ENCODE measurements at regions of chr2 and their contacts with region 1.

Region 1: DNA sequence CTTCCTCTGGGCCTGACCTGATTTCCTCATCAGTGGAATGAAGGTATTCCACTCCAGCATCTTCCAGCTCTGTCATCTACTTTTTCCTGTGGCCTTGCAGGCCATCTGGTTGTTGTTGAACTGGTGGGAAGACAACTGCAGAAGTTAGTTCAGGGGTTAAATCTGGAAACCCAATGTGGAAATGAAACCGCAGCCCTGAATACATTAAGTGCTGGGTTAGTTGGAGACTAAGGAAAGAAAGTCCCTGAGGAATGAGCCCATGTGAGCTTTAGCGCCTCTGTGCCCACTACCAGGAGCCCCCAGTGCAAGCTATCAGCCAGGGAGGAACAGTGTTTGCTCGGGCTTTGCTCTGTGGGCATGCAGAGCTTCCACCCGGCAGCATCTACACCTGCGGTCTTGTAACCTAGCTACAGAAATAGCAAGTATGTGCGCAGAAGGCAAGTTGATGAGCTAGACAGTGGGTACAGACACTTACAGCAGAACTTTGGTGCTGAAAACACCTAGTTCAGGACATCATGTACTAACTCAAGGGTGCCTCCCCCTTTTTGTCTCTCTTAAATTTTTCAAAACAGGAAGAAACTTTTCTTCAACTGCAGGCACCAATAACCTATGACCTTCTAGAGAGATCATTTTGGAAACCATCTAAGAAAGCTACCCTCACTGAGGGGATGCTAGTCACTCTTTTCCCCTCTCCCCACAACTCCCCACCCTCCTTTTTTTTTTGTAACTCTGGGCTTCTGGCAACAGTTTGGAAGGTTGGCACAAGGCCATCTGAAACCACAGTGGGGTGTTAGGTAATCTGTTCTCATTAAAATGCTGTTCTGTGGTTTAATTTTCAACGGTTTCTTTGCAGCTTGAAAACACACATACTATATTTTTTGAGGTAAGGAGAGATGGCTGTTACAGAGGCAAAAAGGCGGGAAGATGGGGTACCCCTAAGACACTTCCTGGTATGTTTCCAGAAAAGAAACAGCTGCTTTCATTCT is 18.3 kb upstream of the CXCR4 start:
- DNase-seq: peak; percentile 52
- ATAC-seq: peak; percentile 48
- H3K4me3 Mint-ChIP-seq: peak overlapping the region; percentile 62
- H3K27ac Mint-ChIP-seq: peak overlapping the region; percentile 99
- H3K4me1 Mint-ChIP-seq: peaks cover 99% of the 10 kb centered on the region
- H3K27me3 Mint-ChIP-seq: no peaks in the 10 kb centered on the region
- CTCF ChIP-seq: no peak

Region 2: GRCh38 chr2:135531231-135532228 is 604.7 kb before region 1 on chr2 and contains the start of gene R3HDM1:
- CTCF ChIA-PET with region 1: no interaction called
- POLR2A ChIA-PET with region 1: interaction called, 3 read pairs
- intact Hi-C with region 1: loop called (anchors 5 kb)
- DNase-seq: peak; percentile 82
- ATAC-seq: peak; percentile 81
- H3K4me3 Mint-ChIP-seq: no peak within 1 kb of the TSS
- H3K27ac Mint-ChIP-seq: peak within 1 kb of the TSS; percentile 68
- H3K4me1 Mint-ChIP-seq: peaks cover 18% of the 10 kb centered on the region
- H3K27me3 Mint-ChIP-seq: no peaks in the 10 kb centered on the region
- CTCF ChIP-seq: no peak
- total RNA-seq, gene R3HDM1: 49.8 and 54.8 TPM in 2 replicates

Region 3: DNA sequence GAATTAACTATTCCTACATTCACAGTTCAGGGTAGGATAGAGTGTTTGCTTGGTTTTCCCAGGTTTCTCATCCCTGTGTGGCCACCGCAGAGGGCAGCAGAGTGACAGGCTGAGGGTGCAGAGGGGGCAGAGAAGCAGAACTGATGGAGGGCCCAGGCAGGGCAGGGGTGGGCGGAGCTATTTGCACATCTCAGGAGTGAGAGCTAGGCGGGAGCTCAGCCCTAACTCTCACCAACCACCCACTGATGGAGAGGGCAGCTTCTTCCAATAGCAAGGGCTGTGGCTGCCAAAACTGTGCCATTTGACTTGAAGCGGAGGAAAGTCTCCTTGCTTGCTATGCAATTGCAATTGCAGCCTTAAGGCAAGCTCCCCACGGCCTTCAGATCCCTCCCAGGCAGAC is 138.8 kb before region 1 on chr2:
- CTCF ChIA-PET with region 1: interaction called, 6 read pairs
- POLR2A ChIA-PET with region 1: interaction called, 24 read pairs
- intact Hi-C with region 1: no loop called
- DNase-seq: peak; percentile 41
- ATAC-seq: peak; percentile 97
- H3K4me3 Mint-ChIP-seq: peak overlapping the region; percentile 24
- H3K27ac Mint-ChIP-seq: peak overlapping the region; percentile 86
- H3K4me1 Mint-ChIP-seq: peaks cover 51% of the 10 kb centered on the region
- H3K27me3 Mint-ChIP-seq: no peaks in the 10 kb centered on the region
- CTCF ChIP-seq: no peak

Region 4: GRCh38 chr2:136117909-136118818 is 18.1 kb before region 1 on chr2 and contains the start of gene CXCR4:
- CTCF ChIA-PET with region 1: interaction called, 18 read pairs
- POLR2A ChIA-PET with region 1: interaction called, 478 read pairs
- intact Hi-C with region 1: loop called (anchors 1 kb)
- DNase-seq: peak; percentile 90
- ATAC-seq: peak; percentile 51
- H3K4me3 Mint-ChIP-seq: peak within 1 kb of the TSS; percentile 96
- H3K27ac Mint-ChIP-seq: peak within 1 kb of the TSS; percentile 97
- H3K4me1 Mint-ChIP-seq: peaks cover 66% of the 10 kb centered on the region
- H3K27me3 Mint-ChIP-seq: no peaks in the 10 kb centered on the region
- CTCF ChIP-seq: no peak
- total RNA-seq, gene CXCR4: 200 and 213 TPM in 2 replicates

Region 5: DNA sequence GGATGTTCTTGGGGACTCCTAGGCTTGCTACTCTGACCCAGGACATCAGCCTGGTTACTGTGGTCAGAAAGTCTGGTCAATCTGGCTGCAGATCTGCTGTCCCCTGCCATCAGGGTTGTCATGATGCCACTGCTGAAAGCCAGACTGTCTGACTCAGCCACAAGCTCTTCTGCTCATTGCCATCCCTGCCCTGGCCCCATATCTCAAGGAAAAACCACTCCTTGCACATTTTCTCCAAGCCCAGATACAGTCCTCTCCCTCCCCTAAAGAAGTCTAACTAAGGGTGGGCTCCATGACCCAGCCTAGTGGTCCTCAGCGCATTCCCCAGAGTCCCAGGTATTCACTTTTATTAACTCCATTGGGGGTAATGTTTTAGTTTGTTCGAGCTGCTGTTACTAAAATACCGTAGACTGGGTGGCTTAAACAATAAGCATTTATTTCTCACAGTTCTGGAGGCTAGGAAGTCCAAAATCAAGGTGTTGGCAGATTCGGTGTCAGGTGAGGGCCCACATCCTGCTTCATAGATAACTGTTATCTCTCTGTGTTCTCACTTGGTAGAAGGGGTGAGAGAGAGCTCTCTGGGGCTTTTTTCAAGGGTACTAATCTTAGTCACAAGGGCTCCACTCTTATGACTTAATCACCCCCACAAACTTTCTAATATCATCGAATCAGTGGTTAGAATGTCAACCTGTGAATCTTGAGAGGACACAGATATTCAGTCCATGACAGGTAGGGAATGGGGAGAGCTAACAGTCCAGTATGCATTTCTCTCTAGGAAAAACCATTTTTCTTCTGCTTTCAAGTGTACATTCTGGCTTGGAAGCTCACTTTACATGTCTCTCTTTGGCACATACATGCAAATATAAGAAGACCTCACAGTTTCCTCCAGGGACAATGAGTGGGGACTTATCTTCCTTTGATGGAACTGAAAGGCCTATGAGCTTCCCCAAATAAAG is 76.5 kb after region 1 on chr2:
- CTCF ChIA-PET with region 1: interaction called, 20 read pairs
- POLR2A ChIA-PET with region 1: interaction called, 248 read pairs
- intact Hi-C with region 1: loop called (anchors 1 kb)
- DNase-seq: no peak
- ATAC-seq: peak; percentile 72
- H3K4me3 Mint-ChIP-seq: peak overlapping the region; percentile 64
- H3K27ac Mint-ChIP-seq: peak overlapping the region; percentile 97
- H3K4me1 Mint-ChIP-seq: peaks cover 97% of the 10 kb centered on the region
- H3K27me3 Mint-ChIP-seq: no peaks in the 10 kb centered on the region
- CTCF ChIP-seq: no peak

Region 6: DNA sequence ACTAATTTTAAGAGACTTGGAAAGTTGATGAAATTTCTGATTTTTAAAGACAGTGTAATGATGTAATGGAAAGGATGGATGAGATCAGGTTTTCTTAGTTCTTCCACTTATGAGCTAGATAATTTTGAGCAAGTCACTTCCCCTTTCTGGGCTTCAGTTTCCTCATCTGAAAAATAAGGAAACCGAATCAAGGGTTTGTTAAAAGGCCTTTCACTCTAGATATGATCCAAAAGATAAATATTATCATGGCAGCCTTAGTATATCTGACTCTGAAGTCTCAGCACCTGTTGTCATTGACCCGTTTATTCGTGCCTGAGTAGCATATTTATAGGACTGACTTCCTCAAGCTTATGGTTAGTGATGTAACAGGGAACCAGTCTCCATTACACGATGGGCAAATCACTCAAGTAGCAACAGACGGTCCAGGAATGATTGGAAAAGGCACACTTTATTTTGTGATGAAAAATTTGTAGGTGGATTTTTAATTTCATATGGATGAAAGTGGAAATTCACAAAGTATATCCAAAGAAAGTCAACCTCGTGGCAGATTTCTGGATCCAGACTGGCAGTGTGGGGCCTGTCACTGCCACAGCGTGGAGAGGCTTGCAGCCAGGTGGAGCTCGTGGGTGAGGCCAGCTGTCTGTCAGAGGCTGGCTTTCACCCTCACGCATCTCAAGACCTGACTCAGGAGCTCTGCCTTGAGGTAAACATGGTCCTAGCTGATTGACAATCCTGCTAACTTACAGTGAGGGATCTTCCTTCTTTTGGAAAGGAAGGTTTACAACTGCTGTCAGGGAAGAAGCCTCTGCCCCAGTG is 119.6 kb after region 1 on chr2:
- CTCF ChIA-PET with region 1: interaction called, 17 read pairs
- POLR2A ChIA-PET with region 1: interaction called, 111 read pairs
- intact Hi-C with region 1: loop called (anchors 1 kb)
- DNase-seq: no peak
- ATAC-seq: peak; percentile 63
- H3K4me3 Mint-ChIP-seq: peak overlapping the region; percentile 55
- H3K27ac Mint-ChIP-seq: peak overlapping the region; percentile 92
- H3K4me1 Mint-ChIP-seq: peaks cover 86% of the 10 kb centered on the region
- H3K27me3 Mint-ChIP-seq: no peaks in the 10 kb centered on the region
- CTCF ChIP-seq: no peak

Measured in activated B cell treated with CpG ODN at 0.5 μM for 24 hours (primary cell).